SK-N-SH (cell line): ENCODE measurements at regions of chr16 and their contacts with region 1.

Region 1: GRCh38 chr16:35431829-35432663 is 1972.6 kb downstream of the TP53TG3F start:
- DNase-seq: peak; percentile 71
- H3K4me3 ChIP-seq: no peak overlapping the region
- H3K27ac ChIP-seq: no peak overlapping the region
- H3K4me1 ChIP-seq: no peaks in the 10 kb centered on the region
- H3K27me3 ChIP-seq: no peaks in the 10 kb centered on the region
- CTCF ChIP-seq: peak; percentile 97
- EP300 ChIP-seq: no peak
- RAD21 ChIP-seq: peak; percentile 64

Region 2: DNA sequence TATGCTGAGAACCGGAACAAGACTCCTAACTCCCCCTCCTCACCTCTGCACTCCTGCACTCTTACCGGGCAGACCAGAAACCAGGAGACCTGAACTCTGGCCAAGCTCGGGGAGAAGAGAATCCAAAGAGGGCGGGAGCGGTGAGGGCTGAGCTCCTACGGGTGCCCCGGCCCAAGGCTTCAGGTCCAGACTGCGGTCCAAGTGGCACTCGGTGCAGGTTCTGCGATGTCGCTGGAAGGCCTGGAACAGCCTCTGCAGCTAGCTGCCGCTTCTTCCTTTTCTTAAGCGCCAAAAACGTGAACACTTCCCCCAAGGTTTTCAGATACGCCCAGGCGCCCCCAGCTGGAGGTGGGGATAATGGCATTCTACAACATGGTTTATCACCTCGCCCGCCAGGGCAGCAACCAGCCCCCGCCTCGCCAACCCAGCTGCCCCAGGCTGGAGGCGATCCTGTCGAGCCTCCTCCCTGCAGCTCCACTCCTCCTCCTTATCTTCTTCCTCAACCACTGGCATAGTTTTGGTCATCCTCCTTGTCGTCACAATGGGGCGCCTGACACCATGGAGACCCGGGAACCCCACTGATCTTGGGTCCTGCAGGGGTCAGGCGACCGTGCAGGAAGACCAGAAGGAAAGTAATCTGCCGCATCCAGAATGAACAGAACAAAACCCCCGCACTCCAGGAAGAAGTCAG is 236.7 kb before region 1 on chr16:
- CTCF ChIA-PET with region 1: no interaction called
- POLR2A ChIA-PET with region 1: no interaction called
- DNase-seq: no peak
- H3K4me3 ChIP-seq: peak overlapping the region in 1 of 2 experiments; percentile 9; a peak in 1 of 4 replicates
- H3K27ac ChIP-seq: no peak overlapping the region
- H3K4me1 ChIP-seq: no peaks in the 10 kb centered on the region; a peak in 1 of 4 replicates
- H3K27me3 ChIP-seq: peaks cover 4% of the 10 kb centered on the region; the same call in 1 of the 2 replicates
- CTCF ChIP-seq: peak; percentile 46
- EP300 ChIP-seq: no peak
- RAD21 ChIP-seq: no peak

Region 3: DNA sequence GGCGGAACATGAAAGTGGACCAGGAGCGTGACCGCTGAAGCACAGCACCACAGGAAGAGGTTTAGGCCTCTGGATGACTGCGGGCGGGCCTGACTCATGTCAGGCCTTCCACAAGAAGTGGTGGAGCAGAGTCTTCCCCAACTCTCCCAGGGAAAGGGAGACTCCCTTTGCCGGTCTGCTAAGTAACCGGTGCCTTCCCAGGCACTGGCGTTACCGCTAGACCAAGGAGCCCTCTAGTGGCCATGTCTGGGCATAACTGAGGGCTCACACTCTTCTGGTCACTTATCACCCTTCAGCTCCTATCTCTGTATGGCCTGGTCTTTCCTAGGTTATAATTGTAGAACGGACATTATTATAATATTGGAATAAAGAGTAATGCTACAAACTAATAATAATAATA is 40.7 kb before region 1 on chr16:
- CTCF ChIA-PET with region 1: interaction called, 40 read pairs
- POLR2A ChIA-PET with region 1: no interaction called
- DNase-seq: peak; percentile 33
- H3K4me3 ChIP-seq: peak overlapping the region in 1 of 2 experiments; percentile 12; a peak in 1 of 4 replicates
- H3K27ac ChIP-seq: no peak overlapping the region
- H3K4me1 ChIP-seq: peaks cover 0 to 2% of the 10 kb centered on the region in 2 experiments; a peak in 2 of 4 replicates
- H3K27me3 ChIP-seq: no peaks in the 10 kb centered on the region
- CTCF ChIP-seq: peak; percentile 89
- EP300 ChIP-seq: no peak
- RAD21 ChIP-seq: peak; percentile 93

Region 4: GRCh38 chr16:35398197-35398596 is 33.8 kb before region 1 on chr16:
- CTCF ChIA-PET with region 1: interaction called, 40 read pairs
- POLR2A ChIA-PET with region 1: no interaction called
- DNase-seq: no peak
- H3K4me3 ChIP-seq: no peak overlapping the region
- H3K27ac ChIP-seq: no peak overlapping the region
- H3K4me1 ChIP-seq: no peaks in the 10 kb centered on the region
- H3K27me3 ChIP-seq: no peaks in the 10 kb centered on the region
- CTCF ChIP-seq: no peak
- EP300 ChIP-seq: no peak
- RAD21 ChIP-seq: no peak

Region 5: DNA sequence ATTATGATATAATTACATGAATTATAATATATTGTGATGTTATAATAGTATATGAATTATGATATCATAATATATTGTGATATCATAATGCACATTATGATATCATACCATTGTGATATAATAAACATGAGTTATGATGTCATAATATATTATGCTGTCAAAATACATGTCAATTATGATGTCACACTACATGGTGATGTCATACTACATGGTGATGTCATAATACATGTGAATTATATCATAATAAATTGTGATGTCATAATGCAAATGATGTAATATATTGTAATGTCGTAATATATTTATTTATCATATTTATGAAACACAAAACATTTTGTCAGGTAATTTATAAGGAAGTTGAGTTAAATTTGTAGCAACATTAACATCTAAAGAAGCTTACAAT is 22.5 kb before region 1 on chr16:
- CTCF ChIA-PET with region 1: interaction called, 35 read pairs
- POLR2A ChIA-PET with region 1: no interaction called
- DNase-seq: no peak
- H3K4me3 ChIP-seq: no peak overlapping the region
- H3K27ac ChIP-seq: no peak overlapping the region
- H3K4me1 ChIP-seq: no peaks in the 10 kb centered on the region; a peak in 1 of 4 replicates
- H3K27me3 ChIP-seq: no peaks in the 10 kb centered on the region
- CTCF ChIP-seq: no peak
- EP300 ChIP-seq: no peak
- RAD21 ChIP-seq: no peak

Region 6: GRCh38 chr16:35449663-35450062 is 17.6 kb after region 1 on chr16:
- CTCF ChIA-PET with region 1: interaction called, 25 read pairs
- POLR2A ChIA-PET with region 1: no interaction called
- DNase-seq: no peak
- H3K4me3 ChIP-seq: no peak overlapping the region
- H3K27ac ChIP-seq: no peak overlapping the region
- H3K4me1 ChIP-seq: no peaks in the 10 kb centered on the region
- H3K27me3 ChIP-seq: no peaks in the 10 kb centered on the region
- CTCF ChIP-seq: no peak
- EP300 ChIP-seq: no peak
- RAD21 ChIP-seq: no peak

Region 7: DNA sequence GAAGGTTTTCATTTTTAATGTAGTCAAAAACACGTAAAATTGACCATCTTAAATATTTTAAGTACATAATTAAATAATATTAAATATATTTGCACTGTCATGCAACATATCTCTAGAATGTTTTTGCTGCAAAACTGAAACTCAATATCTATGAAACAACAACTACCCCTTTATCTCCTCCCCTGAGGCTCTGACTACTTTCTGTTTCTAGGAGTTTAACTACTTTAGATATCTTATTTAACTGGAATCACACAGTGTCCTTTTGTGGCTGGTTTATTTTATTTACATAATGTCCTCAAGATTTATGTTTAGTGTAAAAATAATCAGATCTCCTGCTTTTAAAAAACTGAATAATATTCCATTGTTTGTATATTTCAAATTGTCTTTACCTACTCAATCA is 31.3 kb after region 1 on chr16:
- CTCF ChIA-PET with region 1: interaction called, 20 read pairs
- POLR2A ChIA-PET with region 1: no interaction called
- DNase-seq: no peak
- H3K4me3 ChIP-seq: no peak overlapping the region
- H3K27ac ChIP-seq: peak overlapping the region in 1 of 2 experiments; percentile 17; a peak in 1 of 4 replicates
- H3K4me1 ChIP-seq: no peaks in the 10 kb centered on the region; a peak in 1 of 4 replicates
- H3K27me3 ChIP-seq: no peaks in the 10 kb centered on the region
- CTCF ChIP-seq: no peak
- EP300 ChIP-seq: no peak
- RAD21 ChIP-seq: no peak

Region 8: GRCh38 chr16:35492225-35492624 is 60.2 kb after region 1 on chr16:
- CTCF ChIA-PET with region 1: interaction called, 10 read pairs
- POLR2A ChIA-PET with region 1: no interaction called
- DNase-seq: peak; percentile 87
- H3K4me3 ChIP-seq: peak overlapping the region; percentile 38 to 62
- H3K27ac ChIP-seq: no peak overlapping the region; a peak in 1 of 4 replicates
- H3K4me1 ChIP-seq: peaks cover 0 to 4% of the 10 kb centered on the region in 2 experiments; a peak in 2 of 4 replicates
- H3K27me3 ChIP-seq: no peaks in the 10 kb centered on the region
- CTCF ChIP-seq: peak; percentile 67
- EP300 ChIP-seq: no peak
- RAD21 ChIP-seq: peak; percentile 56